Body of pancreas (tissue), 4 donors: ENCODE measurements at regions of chr10 and their contacts with region 1.

Region 1: DNA sequence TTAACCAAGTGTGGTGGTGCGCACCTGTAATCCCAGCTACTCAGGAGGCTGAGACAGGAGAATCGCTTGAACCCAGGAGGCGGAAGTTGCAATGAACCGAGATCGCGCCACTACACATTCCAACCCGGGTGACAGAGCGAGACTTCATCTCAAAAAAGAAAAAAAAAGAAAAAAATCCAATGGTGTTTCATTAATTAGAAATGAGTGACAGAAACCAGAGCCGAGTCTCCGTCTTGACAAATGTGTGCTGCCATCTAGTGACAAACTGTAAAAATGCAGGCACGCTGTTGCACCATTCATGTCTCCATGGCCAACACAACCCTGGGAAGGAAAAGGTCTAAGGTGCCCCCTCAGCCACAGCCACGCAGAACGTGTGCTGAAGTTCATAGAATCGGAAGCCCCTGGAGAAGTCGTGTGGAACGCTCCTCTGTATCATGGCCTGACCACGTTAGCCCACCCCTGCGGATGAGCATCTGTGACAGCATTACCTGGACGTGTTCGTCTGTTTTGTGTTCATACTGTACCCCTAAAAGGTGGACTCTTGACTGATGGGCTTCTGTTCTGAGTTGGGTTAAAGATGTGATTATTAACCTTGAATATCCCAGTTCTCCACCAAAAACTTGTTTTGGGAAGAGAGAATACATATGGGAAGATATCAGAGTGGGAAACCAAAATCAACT is 94.9 kb downstream of the LYZL2 start:
- DNase-seq: peak; percentile 75 to 82 (median 79)
- ATAC-seq: peak; percentile 78
- H3K4me3 ChIP-seq: no peak overlapping the region
- H3K27ac ChIP-seq: no peak overlapping the region
- H3K4me1 ChIP-seq: peaks cover 8% of the 10 kb centered on the region
- H3K27me3 ChIP-seq: no peaks in the 10 kb centered on the region
- CTCF ChIP-seq: peak; percentile 84 to 94 (median 89)
- POLR2A ChIP-seq: no peak

Region 2: DNA sequence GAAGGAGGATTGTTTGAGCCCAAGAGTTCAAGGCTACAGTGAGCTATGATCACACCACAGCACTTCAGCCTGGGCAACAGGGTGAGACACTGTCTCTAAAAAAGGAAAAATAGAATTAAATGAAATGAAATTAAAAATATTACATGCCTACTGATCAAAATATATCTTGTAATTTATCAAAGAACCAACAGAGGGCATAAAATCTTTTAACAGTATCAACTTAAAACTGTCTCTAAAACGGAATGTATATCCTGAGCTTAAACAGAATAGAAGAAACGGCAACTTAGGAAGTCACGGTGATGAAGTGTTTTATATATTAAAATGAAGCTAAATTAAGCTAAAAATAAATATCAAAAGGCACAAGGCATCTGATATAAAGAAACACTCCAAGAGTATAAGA is 264.4 kb before region 1 on chr10:
- intact Hi-C with region 1: no loop called
- DNase-seq: no peak
- ATAC-seq: no peak
- H3K4me3 ChIP-seq: no peak overlapping the region
- H3K27ac ChIP-seq: no peak overlapping the region
- H3K4me1 ChIP-seq: no peaks in the 10 kb centered on the region
- H3K27me3 ChIP-seq: no peaks in the 10 kb centered on the region
- CTCF ChIP-seq: no peak
- POLR2A ChIP-seq: no peak

Region 3: GRCh38 chr10:30392564-30392990 is 142.0 kb before region 1 on chr10:
- intact Hi-C with region 1: loop called (anchors 5 kb)
- DNase-seq: peak; percentile 72 to 74 (median 74)
- ATAC-seq: peak; percentile 98
- H3K4me3 ChIP-seq: no peak overlapping the region
- H3K27ac ChIP-seq: no peak overlapping the region
- H3K4me1 ChIP-seq: peaks cover 7% of the 10 kb centered on the region
- H3K27me3 ChIP-seq: no peaks in the 10 kb centered on the region
- CTCF ChIP-seq: peak; percentile 77 to 97 (median 90)
- POLR2A ChIP-seq: no peak

Region 4: DNA sequence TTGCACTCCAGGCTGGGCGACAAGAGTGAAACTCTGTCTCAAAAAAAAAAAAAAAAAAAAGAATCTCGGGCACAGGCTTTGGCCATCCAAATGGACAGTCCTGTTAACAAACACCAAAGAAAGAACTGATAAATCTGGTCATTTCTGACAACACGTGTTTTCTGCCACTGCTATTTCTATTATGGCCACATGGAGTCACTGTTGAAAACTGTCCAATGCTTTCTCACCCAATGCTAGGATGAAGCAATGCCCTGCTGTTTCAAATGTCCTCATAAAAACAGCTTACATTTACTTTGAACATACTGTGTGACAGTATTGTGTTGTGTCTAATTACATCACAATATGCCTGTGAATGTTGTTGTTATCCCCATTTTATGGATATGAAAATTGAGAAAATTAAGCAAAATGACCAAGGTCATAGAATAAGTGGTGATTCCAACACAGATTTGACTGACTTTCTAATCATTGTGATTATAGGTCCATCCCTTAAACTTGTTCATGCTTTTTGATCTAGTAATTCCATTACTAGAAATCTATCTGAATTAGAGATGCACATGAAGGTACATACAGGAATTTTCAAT is 120.5 kb before region 1 on chr10:
- intact Hi-C with region 1: loop called (anchors 5 kb)
- DNase-seq: peak; percentile 20 to 61 (median 27)
- ATAC-seq: peak; percentile 85
- H3K4me3 ChIP-seq: no peak overlapping the region
- H3K27ac ChIP-seq: no peak overlapping the region
- H3K4me1 ChIP-seq: peaks cover 9% of the 10 kb centered on the region
- H3K27me3 ChIP-seq: no peaks in the 10 kb centered on the region
- CTCF ChIP-seq: peak; percentile 52 to 91 (median 88)
- POLR2A ChIP-seq: no peak